ENCODE measurements at regions of chr3 and their contacts with region 1.

Region 1: DNA sequence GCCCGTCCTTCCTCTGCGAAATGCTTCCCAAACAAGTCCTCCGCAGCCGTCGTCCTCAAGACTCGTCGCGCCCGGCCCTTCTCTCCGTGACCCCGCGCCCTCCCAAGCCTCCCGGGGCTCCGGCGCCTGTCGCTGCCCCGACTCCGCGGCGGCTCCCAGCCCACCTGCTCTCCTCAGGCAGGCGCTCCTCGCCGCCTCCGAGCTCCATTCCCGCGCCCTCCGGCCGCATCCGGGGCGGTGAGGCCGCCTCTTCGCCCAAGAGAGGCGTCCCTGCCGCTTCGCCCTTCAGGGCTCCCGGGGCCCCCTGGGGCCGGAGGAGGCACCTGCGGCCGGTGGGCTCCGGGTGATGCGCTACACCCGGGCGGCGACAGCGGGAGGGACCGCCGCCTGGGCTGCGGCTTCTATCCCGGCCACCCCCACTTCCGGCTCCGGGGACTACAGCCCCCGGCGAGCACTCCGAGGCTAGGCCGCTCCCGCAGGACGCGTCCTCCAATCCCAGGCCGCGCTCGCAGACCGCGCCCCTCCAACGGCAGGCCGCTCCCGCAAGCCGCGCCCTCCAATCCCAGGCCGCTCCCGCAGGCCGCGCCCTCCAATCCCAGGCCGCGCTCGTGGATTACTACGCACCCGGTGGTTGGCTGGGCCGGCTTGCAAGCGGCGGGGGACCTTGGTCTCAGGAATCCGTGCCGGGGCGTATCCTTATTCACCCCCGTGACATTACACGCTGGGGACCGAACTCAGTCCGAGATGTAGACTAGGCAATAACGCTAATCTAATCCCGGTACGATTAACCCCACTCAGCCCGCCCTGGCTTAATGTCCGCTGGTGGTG is at the start of gene RUBCN:
- DNase-seq: peak; percentile 91 to 96 (median 94)
- H3K4me3 ChIP-seq: peak within 1 kb of the TSS; percentile 93
- H3K4me3 Mint-ChIP-seq: peak within 1 kb of the TSS; percentile 89 to 99 (median 94)
- H3K27ac ChIP-seq: peak within 1 kb of the TSS; percentile 69
- H3K27ac Mint-ChIP-seq: peak within 1 kb of the TSS; percentile 88 to 97 (median 94)
- H3K4me1 ChIP-seq: peaks cover 18% of the 10 kb centered on the region
- H3K4me1 Mint-ChIP-seq: peaks cover 26 to 49% (median 36%) of the 10 kb centered on the region in 3 donors
- H3K27me3 ChIP-seq: no peaks in the 10 kb centered on the region
- H3K27me3 Mint-ChIP-seq: no peaks in the 10 kb centered on the region
- total RNA-seq, gene RUBCN: 43.2 to 45.9 TPM

Region 2: GRCh38 chr3:197711973-197712707 is 24.6 kb before region 1 on chr3:
- CTCF ChIA-PET with region 1: interaction called, 4 read pairs
- POLR2A ChIA-PET with region 1: interaction called, 15 read pairs
- DNase-seq: peak; percentile 78 to 92 (median 87)
- H3K4me3 ChIP-seq: peak overlapping the region; percentile 14
- H3K4me3 Mint-ChIP-seq: peak overlapping the region; percentile 81 to 96 (median 87)
- H3K27ac ChIP-seq: peak overlapping the region; percentile 86
- H3K27ac Mint-ChIP-seq: peak overlapping the region; percentile 90 to 100 (median 98)
- H3K4me1 ChIP-seq: peaks cover 16% of the 10 kb centered on the region
- H3K4me1 Mint-ChIP-seq: peaks cover 18 to 32% (median 31%) of the 10 kb centered on the region in 3 donors
- H3K27me3 ChIP-seq: no peaks in the 10 kb centered on the region
- H3K27me3 Mint-ChIP-seq: no peaks in the 10 kb centered on the region

Region 3: DNA sequence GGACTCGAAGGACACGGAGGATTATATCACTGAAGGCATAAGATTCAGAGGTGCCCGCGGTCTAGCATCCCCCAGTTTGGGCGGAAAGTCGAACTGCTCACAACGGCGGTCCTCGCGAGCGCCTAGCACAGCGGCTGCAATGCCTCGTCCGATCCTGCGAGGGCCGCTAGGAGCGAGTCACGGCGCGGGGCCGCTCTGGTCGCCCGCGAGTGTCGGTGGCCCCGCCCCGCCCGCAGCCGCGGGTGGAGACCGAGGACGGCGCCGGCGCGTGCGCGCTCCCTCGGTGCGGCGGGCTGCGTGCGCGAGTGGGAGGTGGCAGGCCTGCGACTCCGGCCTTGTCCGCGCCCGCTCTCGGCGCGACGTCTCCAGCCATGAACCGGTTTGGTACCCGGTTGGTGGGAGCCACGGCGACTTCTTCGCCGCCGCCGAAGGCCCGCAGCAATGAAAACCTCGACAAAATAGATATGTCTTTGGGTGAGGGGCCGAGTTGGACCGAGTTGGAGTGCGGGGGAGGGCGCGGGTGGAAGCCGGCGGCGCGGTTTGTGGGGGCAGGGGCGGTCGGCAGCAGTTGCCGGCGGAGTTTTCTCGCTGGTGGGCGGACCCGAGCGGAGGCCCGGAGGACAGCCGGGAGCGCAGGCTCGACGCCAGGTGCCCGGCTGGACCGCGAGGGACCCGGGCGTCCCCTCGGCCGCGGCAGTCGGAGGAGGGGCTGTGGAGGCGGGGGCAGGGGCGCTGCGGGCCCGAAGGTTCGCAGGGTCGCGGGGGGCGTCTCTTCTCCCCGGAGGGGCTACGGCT is 13.1 kb after region 1 on chr3 and contains the start of gene FYTTD1:
- CTCF ChIA-PET with region 1: interaction called, 5 read pairs
- POLR2A ChIA-PET with region 1: interaction called, 12 read pairs
- DNase-seq: peak; percentile 82 to 90 (median 88)
- H3K4me3 ChIP-seq: peak within 1 kb of the TSS; percentile 82
- H3K4me3 Mint-ChIP-seq: peak within 1 kb of the TSS; percentile 93 to 100 (median 97)
- H3K27ac ChIP-seq: peak within 1 kb of the TSS; percentile 66
- H3K27ac Mint-ChIP-seq: peak within 1 kb of the TSS; percentile 95 to 99 (median 99)
- H3K4me1 ChIP-seq: peaks cover 40% of the 10 kb centered on the region
- H3K4me1 Mint-ChIP-seq: peaks cover 42 to 52% (median 48%) of the 10 kb centered on the region in 3 donors
- H3K27me3 ChIP-seq: no peaks in the 10 kb centered on the region
- H3K27me3 Mint-ChIP-seq: peaks cover 0 to 5% of the 10 kb centered on the region in 2 donors
- total RNA-seq, gene FYTTD1: 47.6 to 54.8 TPM

Measured in CD8-positive, alpha-beta memory T cell (primary cell).